ENCODE measurements at regions of chr13 and their contacts with region 1.

Region 1: DNA sequence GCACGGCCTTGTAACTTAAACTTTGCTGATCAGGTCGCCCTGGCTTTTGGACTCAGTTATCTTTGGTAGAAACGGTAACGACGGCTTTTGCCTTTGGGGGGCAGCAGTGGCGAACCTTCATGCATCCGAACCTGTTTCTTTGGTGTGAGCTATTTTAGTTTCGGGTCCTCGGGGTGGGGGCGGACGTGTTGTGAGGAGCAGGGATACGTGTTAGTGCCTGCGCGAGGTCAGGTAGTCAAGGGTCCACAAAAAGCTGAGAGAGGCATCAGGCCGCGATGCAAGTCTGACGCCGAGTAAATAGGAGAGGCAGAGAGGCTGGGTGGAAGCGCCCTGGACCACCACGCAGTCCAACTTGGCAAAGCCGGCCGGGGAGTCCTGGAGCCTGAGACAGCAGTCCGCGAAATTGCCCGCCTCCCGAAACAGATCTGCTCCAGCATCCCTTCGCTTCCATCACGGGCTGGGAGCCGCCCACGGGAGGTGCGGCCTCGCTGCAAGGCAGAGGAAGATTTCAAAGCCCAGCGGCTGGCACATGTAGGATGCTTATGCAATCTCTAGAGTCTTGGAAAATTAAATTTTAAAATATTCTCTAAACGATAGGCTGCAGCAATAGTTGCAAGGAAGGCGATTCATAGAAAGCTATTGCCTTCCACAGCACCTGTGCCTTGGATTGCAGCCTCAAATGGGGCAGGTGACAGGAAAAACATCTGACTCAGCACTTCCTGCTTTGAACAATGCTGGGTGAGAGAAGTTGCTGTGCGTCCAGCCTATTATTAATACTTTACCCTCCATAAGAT is 4.6 kb upstream of the TPP2 start:
- DNase-seq: peak; percentile 20
- H3K4me3 ChIP-seq: peak overlapping the region; percentile 50
- H3K27me3 ChIP-seq: no peaks in the 10 kb centered on the region
- CTCF ChIP-seq: peak; percentile 77

Region 2: GRCh38 chr13:102724923-102725322 is 132.7 kb after region 1 on chr13:
- CTCF ChIA-PET with region 1: interaction called, 17 read pairs
- POLR2A ChIA-PET with region 1: interaction called, 4 read pairs
- DNase-seq: no peak
- H3K4me3 ChIP-seq: no peak overlapping the region
- H3K27me3 ChIP-seq: peaks cover 2% of the 10 kb centered on the region; the same call in 1 of the 2 replicates
- CTCF ChIP-seq: peak; percentile 53

Region 3: DNA sequence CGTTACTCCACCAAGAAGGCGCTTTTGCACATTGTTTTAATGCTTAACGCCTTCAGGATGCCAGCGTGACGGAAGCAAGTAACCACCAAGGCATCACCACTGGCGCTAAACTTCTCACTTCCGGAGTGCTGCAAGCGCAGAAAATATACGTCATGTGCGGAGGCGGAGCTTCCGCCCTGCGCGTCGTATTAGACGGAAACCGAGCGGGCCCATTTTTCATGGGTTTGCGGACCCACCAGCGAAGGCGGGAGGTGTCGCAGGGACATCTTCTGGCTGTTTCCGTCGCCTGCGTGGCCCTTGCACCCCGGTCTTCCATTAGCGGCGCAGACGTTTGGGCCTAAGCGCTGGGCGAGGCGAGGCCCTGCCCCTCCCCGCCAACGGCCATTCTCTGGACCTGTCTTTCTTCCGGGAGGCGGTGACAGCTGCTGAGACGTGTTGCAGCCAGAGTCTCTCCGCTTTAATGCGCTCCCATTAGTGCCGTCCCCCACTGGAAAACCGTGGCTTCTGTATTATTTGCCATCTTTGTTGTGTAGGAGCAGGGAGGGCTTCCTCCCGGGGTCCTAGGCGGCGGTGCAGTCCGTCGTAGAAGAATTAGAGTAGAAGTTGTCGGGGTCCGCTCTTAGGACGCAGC is 253.6 kb after region 1 on chr13 and contains the start of gene ERCC5:
- CTCF ChIA-PET with region 1: interaction called, 11 read pairs
- POLR2A ChIA-PET with region 1: interaction called, 3 read pairs
- DNase-seq: peak; percentile 76
- H3K4me3 ChIP-seq: peak within 1 kb of the TSS; percentile 98
- H3K27me3 ChIP-seq: no peaks in the 10 kb centered on the region
- CTCF ChIP-seq: no peak
- polyA plus RNA-seq, gene ERCC5: 21.7 and 35.1 TPM in 2 replicates